Sigmoid colon (tissue), 7 donors: ENCODE measurements at regions of chr18 and their contacts with region 1.

Region 1: GRCh38 chr18:13260197-13260934 is 41.8 kb downstream of the LDLRAD4 start:
- DNase-seq: no peak
- H3K4me3 ChIP-seq: no peak overlapping the region
- H3K27ac ChIP-seq: peak overlapping the region; percentile 69 to 79 (median 75)
- H3K4me1 ChIP-seq: peaks cover 0 to 69% (median 64%) of the 10 kb centered on the region in 4 donors
- H3K27me3 ChIP-seq: no peaks in the 10 kb centered on the region
- CTCF ChIP-seq: no peak
- EP300 ChIP-seq: no peak
- POLR2A ChIP-seq: no peak

Region 2: GRCh38 chr18:13235981-13236380 is 24.4 kb before region 1 on chr18:
- intact Hi-C with region 1: no loop called
- DNase-seq: peak; percentile 91
- H3K4me3 ChIP-seq: no peak overlapping the region
- H3K27ac ChIP-seq: peak overlapping the region in 3 of 4 donors; percentile 61 to 82 (median 67)
- H3K4me1 ChIP-seq: peaks cover 0 to 76% (median 27%) of the 10 kb centered on the region in 4 donors
- H3K27me3 ChIP-seq: no peaks in the 10 kb centered on the region
- CTCF ChIP-seq: no peak
- EP300 ChIP-seq: no peak
- POLR2A ChIP-seq: no peak

Region 3: GRCh38 chr18:13381944-13382365 is 121.6 kb after region 1 on chr18:
- intact Hi-C with region 1: loop called (anchors 5 kb)
- DNase-seq: peak; percentile 88
- H3K4me3 ChIP-seq: peak overlapping the region in 3 of 4 donors; percentile 27 to 41 (median 33)
- H3K27ac ChIP-seq: peak overlapping the region; percentile 66 to 86 (median 82)
- H3K4me1 ChIP-seq: peaks cover 0 to 58% (median 32%) of the 10 kb centered on the region in 4 donors
- H3K27me3 ChIP-seq: no peaks in the 10 kb centered on the region
- CTCF ChIP-seq: no peak
- EP300 ChIP-seq: peak in 1 of 4 donors; percentile 30
- POLR2A ChIP-seq: no peak